Activated CD4-positive, alpha-beta T cell treated with anti-CD3 and anti-CD28 coated beads, Interleukin-2, amount 10 ng/mL, durations not matched to agents 24 days and 14 days (primary cell): ENCODE measurements at regions of chr9 and their contacts with region 1.

Region 1: DNA sequence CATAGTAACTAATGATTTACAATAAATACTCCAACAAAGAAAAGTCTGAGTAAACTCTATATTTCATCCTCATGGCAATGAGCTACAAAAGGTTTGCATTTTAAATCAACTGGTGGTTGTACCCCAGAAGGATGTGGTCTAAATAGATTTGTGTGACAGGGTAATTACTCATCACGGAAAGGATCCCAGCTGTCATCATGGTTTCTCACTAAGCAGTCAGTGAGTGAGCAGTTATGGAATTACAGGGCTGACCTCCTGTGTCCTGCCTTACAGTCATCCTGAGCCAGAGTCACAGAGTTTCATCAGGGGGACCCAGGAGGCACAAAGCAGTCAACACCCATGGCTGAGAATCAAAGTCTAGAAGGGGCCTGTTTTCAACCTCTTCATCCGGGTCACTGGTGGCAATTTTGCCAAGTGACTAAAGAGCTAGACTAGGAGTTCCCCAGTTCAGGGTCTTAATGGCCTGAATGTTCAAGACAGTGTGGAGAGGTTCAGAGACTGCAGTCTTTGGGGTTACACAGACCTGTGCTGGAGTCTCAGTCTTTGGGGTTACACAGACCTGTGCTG is 210.7 kb upstream of the SLC24A2 start:
- DNase-seq: peak; percentile 88
- H3K4me3 Mint-ChIP-seq: peak overlapping the region; percentile 74
- H3K27ac Mint-ChIP-seq: peak overlapping the region; percentile 99
- H3K4me1 Mint-ChIP-seq: peaks cover 53% of the 10 kb centered on the region
- H3K27me3 Mint-ChIP-seq: no peaks in the 10 kb centered on the region

Region 2: DNA sequence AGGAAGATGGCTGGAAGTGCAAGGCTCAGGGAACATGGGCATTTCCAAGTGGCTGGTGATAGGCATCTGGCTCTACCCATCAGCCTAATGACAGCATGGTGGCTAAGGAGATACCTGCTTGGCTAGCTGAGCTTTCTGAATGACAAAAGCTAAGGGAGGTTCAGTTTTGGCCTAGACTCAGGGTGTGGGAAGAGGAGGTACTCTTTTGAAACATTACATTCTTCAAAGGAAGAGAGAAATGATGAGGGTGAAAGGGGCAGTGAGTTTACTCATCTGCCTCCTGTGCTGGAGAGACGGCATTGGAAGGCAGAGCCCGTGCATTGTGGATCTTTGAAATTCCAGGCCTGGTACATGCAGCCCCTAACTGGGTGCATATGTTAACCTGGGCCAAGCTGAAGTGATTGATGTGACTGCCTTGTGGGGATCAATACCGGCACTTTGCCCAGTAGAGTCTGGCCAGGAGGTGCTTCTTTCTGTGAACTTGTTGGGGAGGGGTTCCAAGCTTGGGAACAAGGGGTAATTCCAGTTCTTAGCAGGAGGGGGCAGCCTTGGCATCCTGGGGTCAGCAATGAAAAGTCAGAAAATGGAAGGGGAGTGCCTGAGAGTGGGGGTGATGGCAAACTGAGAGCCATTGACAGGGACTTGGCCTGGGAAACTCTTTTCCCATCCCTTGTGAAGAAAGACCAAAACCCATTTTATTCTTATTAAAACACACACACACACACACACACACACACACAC is 482.2 kb before region 1 on chr9:
- intact Hi-C with region 1: loop called (anchors 10 kb)
- DNase-seq: no peak
- H3K4me3 Mint-ChIP-seq: no peak overlapping the region
- H3K27ac Mint-ChIP-seq: no peak overlapping the region
- H3K4me1 Mint-ChIP-seq: peaks cover 21% of the 10 kb centered on the region
- H3K27me3 Mint-ChIP-seq: no peaks in the 10 kb centered on the region

Region 3: GRCh38 chr9:19967216-19967887 is 32.2 kb before region 1 on chr9:
- intact Hi-C with region 1: no loop called
- DNase-seq: no peak
- H3K4me3 Mint-ChIP-seq: no peak overlapping the region
- H3K27ac Mint-ChIP-seq: no peak overlapping the region
- H3K4me1 Mint-ChIP-seq: peaks cover 5% of the 10 kb centered on the region
- H3K27me3 Mint-ChIP-seq: peaks cover 3% of the 10 kb centered on the region

Region 4: GRCh38 chr9:20043035-20043434 is 43.5 kb after region 1 on chr9:
- intact Hi-C with region 1: loop called (anchors 1 kb)
- DNase-seq: peak; percentile 68
- H3K4me3 Mint-ChIP-seq: peak overlapping the region; percentile 61
- H3K27ac Mint-ChIP-seq: peak overlapping the region; percentile 65
- H3K4me1 Mint-ChIP-seq: peaks cover 35% of the 10 kb centered on the region
- H3K27me3 Mint-ChIP-seq: no peaks in the 10 kb centered on the region

Region 5: DNA sequence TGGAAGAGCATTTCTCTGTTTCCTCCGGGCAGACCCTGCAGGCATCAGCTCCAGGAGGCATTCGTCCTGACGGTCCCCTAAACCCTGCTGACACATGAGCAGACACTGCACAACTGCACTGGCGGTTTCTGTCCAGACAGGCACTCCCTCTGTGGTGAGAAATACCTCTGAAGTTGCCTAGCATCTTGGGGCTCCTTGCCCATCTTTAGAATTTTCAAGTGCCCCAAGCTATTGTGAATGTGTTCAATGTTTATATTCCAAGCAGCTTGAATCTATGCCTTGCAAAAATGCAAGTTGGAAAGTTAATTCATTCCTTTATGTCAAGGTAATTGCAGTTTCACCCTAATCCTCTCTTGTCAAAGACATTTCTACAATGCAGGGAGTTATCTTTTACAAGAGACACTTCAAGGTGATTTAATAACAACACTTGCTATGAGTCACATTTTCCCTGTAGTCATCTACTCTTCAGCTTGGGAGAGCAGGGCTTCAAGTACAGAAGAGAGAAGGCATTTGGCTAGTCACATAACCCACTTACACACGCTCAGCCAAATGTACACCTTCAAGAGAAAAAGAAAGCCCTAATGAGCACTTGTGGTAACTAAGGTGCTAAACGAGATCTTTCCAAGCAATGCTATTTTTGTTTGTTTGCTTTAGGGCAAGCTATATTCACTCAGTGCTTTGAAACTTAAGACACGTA is 320.2 kb after region 1 on chr9:
- intact Hi-C with region 1: loop called (anchors 1 kb)
- DNase-seq: peak; percentile 80
- H3K4me3 Mint-ChIP-seq: peak overlapping the region; percentile 60
- H3K27ac Mint-ChIP-seq: peak overlapping the region; percentile 94
- H3K4me1 Mint-ChIP-seq: peaks cover 78% of the 10 kb centered on the region
- H3K27me3 Mint-ChIP-seq: no peaks in the 10 kb centered on the region

Region 6: DNA sequence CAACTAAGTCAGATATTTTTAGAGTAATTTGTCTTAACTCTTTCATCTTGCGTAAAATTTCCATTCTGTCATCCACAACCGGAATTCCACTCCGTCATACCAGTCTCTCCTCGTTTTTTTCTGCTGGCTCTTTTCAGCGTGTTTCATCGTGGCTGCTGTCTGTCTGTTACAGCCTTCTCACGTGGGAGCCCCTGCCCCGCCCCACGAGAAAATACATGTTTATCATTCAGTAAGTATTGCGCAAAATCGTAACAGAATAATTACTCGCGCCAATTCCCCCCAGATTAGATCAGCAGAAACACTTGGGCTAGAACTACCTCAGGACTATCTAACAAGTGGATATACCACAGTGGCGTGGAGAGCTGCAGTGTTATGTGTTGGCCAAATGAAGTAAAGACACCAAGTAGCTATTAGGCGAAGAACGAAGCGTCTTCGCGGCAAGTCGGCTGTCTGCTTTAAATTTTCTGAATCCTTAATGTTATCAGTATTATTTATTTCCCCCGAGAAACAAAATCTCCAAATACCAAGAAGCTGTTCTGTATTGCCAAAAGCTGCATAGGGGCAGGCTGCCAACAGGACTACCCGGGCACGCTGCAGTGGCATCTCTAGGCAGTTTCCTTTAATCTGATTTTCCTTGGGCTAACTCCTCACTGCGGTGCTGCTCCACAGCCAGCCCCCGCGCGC is 683.9 kb after region 1 on chr9:
- intact Hi-C with region 1: loop called (anchors 1 kb)
- DNase-seq: peak; percentile 80
- H3K4me3 Mint-ChIP-seq: peak overlapping the region; percentile 90
- H3K27ac Mint-ChIP-seq: peak overlapping the region; percentile 92
- H3K4me1 Mint-ChIP-seq: peaks cover 20% of the 10 kb centered on the region
- H3K27me3 Mint-ChIP-seq: no peaks in the 10 kb centered on the region

Region 7: DNA sequence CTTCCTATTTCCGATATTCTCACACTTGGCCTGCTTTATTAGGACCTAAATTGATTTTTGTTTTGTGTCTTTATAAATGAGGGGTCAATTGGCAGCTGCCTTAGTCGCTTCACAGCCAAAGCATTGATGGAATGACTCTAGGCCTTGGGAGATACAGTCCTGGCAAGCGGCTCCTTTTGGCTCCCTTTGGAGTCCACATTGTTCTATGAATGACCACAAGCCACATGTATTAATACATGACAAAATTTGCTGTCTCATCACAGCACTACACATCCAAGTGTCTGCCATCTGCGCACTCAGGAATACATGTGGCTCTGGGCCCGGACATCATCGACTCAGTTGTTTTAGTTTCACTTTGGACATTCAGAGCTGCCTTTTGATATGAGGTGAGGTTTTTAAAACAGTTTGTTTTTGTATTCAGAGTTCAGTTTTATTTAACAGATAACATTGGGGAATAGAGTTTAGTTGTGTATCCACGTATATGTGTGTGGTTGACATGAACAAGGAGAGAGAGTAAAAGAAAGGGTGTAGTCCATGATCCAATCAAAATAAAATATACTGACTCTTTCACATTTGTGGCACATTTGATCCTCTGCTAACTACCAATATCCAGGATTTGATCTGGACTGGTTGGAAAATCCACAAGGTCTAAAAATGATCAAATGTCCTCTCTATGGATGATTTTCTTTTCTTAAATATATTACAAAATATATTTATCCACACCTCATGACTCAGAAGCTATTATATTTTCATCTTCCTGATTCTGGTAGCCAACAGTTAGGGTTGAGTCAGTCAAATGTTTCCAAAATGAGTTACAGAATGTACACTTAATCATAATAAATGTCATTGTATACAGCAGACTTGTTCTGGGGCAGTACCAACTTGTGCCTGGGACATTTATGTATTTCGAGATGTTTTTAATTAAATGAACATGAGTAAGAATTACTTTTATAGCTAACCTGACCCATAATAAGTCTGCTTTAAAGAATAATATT is 1688.8 kb after region 1 on chr9:
- intact Hi-C with region 1: loop called (anchors 5 kb)
- DNase-seq: no peak
- H3K4me3 Mint-ChIP-seq: no peak overlapping the region
- H3K27ac Mint-ChIP-seq: no peak overlapping the region
- H3K4me1 Mint-ChIP-seq: peaks cover 24% of the 10 kb centered on the region
- H3K27me3 Mint-ChIP-seq: peaks cover 15% of the 10 kb centered on the region